Activated naive CD4-positive, alpha-beta T cell treated with anti-CD3 and anti-CD28 coated beads for 36 hours (primary cell): ENCODE measurements at regions of chrX and their contacts with region 1.

Region 1: DNA sequence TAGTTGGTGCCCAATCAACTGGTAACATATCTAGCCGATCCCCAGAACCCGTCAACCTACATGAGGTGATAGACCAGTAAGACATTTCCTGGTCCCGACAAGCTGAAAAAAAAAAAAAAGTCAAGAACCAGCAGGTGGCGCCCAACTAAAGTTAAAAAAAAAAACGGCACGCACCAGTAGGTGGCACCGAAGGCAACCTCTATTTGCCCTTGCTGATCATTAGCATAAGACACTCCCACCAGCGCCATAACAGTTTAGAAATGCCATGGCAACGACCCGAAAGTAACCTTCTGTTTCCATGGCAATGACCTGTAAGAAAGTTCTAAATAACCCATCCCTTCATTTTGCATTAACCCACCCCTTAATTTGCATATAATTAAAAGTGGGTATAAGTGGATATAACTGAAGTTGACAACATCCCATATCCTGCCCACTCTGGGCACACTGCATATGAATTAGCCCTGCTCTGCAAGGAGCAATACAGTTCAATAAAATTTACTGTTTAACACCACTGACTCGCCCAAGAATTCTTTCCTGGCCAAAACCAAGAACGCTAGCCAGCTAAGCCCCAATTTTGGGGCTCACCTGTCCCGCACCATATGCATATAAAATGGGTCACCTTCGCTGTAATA is 83.9 kb upstream of the SPANXB1 start:
- DNase-seq: peak; percentile 22
- H3K4me3 Mint-ChIP-seq: no peak overlapping the region
- H3K27ac Mint-ChIP-seq: no peak overlapping the region
- H3K4me1 Mint-ChIP-seq: peaks cover 13% of the 10 kb centered on the region
- H3K27me3 Mint-ChIP-seq: no peaks in the 10 kb centered on the region

Region 2: DNA sequence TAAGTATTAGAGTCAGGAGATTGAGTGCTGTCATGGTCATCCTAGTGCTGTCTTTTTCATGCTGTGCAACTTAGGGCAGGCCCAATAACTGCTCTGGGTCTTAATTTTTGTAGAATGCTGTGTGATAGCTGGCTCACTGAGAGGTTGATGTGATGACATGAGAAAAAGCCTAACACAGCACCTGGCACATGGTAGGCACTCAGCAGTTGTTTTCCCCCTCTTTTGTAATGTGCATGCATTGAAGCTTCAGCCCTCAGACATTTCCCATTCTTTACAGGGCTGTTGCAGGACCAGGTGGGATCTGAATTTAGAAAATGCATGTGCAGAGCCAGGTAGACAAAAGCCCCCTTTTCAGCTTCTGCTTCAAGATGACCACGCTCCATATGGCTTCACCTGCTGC is 369.5 kb before region 1 on chrX:
- CTCF ChIA-PET with region 1: no interaction called
- intact Hi-C with region 1: no loop called
- DNase-seq: no peak
- H3K4me3 Mint-ChIP-seq: no peak overlapping the region
- H3K27ac Mint-ChIP-seq: no peak overlapping the region
- H3K4me1 Mint-ChIP-seq: no peaks in the 10 kb centered on the region
- H3K27me3 Mint-ChIP-seq: peaks cover 3% of the 10 kb centered on the region

Region 3: DNA sequence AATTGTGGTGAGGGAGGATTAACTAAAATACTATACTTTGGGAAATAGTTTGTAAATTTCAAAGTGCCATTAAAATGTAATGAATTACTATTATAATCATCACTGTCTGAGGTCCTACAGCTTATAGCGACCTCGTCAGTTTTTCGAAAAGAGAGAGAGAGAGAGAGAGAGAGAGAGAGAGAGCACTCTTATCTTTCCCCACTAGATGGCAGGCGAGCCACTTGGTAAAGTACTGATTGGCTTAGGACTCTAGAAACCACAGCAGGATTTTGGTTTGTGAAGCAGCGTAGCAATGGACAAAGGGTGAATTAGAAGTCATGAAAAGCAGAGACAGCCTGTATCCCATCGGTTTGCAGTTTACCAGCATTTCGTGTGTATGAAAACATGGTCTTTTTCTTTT is 156.5 kb before region 1 on chrX:
- CTCF ChIA-PET with region 1: interaction called, 3 read pairs
- intact Hi-C with region 1: loop called (anchors 5 kb)
- DNase-seq: peak; percentile 45
- H3K4me3 Mint-ChIP-seq: no peak overlapping the region
- H3K27ac Mint-ChIP-seq: no peak overlapping the region
- H3K4me1 Mint-ChIP-seq: peaks cover 8% of the 10 kb centered on the region
- H3K27me3 Mint-ChIP-seq: peaks cover 23% of the 10 kb centered on the region

Region 4: GRCh38 chrX:140817942-140818341 is 100.6 kb before region 1 on chrX:
- CTCF ChIA-PET with region 1: no interaction called
- intact Hi-C with region 1: loop called (anchors 5 kb)
- DNase-seq: no peak
- H3K4me3 Mint-ChIP-seq: no peak overlapping the region
- H3K27ac Mint-ChIP-seq: no peak overlapping the region
- H3K4me1 Mint-ChIP-seq: no peaks in the 10 kb centered on the region
- H3K27me3 Mint-ChIP-seq: peaks cover 2% of the 10 kb centered on the region

Region 5: GRCh38 chrX:141176586-141177451 is 258.3 kb after region 1 on chrX and contains the start of gene LDOC1:
- CTCF ChIA-PET with region 1: no interaction called
- intact Hi-C with region 1: loop called (anchors 10 kb)
- DNase-seq: peak; percentile 78
- H3K4me3 Mint-ChIP-seq: peak within 1 kb of the TSS; percentile 72
- H3K27ac Mint-ChIP-seq: no peak within 1 kb of the TSS
- H3K4me1 Mint-ChIP-seq: peaks cover 9% of the 10 kb centered on the region
- H3K27me3 Mint-ChIP-seq: no peaks in the 10 kb centered on the region
- total RNA-seq, gene LDOC1: 5.4 to 6.9 TPM

Region 6: DNA sequence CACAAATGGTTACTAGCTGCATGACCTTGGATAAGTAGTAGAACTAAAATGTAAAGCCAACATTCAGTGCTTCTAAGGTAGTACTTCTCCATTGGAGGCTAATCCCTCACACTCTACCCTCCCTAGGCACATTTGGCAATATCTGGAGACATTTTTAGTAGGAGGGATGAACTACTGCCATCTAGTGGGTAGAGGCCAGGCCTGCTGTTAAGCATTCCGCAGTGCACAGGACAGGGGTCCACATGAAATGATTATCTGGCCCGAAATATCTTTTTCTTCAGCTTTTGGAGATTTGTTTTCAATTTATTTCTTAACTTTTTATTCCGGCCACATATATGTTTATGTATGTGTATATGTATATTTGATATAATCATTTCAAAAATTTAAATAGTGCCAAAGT is 359.8 kb after region 1 on chrX:
- CTCF ChIA-PET with region 1: interaction called, 4 read pairs
- intact Hi-C with region 1: loop called (anchors 1 kb)
- DNase-seq: peak; percentile 4
- H3K4me3 Mint-ChIP-seq: no peak overlapping the region
- H3K27ac Mint-ChIP-seq: no peak overlapping the region
- H3K4me1 Mint-ChIP-seq: no peaks in the 10 kb centered on the region
- H3K27me3 Mint-ChIP-seq: no peaks in the 10 kb centered on the region